ENCODE measurements at regions of chr4 and their contacts with region 1.

Region 1: DNA sequence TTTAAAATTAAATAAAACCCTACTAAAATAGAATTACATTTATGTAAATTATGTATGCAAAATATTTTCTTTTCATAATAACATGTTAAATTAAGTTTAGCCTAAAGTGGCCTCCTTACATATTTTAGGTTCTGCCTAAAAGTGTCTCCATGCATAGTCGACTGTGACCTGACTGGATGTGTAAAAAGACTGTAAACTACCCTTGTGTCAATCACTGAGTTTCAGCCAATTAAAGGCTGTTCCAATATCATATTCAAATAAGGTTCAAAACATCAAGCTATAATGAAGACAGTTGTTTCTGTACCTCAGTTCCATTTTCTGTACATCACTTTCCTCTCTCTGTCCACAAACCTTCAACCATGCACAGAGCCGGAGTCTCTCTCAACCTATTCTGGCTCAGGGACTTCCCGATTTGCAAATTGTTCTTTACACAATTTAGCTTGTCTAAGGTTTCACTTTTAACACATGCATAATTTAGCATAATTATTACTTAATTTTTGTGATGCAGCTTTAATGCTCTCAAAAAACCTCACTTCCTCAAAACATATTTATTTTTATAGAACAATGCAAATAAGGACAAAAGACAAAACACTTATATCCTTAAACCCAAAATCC is 60.1 kb downstream of the SH3RF1 start:
- DNase-seq: no peak
- ATAC-seq: peak; percentile 88
- H3K4me3 Mint-ChIP-seq: peak overlapping the region; percentile 67
- H3K27ac Mint-ChIP-seq: peak overlapping the region; percentile 89
- H3K4me1 Mint-ChIP-seq: peaks cover 53% of the 10 kb centered on the region
- H3K27me3 Mint-ChIP-seq: no peaks in the 10 kb centered on the region
- CTCF ChIP-seq: no peak

Region 2: DNA sequence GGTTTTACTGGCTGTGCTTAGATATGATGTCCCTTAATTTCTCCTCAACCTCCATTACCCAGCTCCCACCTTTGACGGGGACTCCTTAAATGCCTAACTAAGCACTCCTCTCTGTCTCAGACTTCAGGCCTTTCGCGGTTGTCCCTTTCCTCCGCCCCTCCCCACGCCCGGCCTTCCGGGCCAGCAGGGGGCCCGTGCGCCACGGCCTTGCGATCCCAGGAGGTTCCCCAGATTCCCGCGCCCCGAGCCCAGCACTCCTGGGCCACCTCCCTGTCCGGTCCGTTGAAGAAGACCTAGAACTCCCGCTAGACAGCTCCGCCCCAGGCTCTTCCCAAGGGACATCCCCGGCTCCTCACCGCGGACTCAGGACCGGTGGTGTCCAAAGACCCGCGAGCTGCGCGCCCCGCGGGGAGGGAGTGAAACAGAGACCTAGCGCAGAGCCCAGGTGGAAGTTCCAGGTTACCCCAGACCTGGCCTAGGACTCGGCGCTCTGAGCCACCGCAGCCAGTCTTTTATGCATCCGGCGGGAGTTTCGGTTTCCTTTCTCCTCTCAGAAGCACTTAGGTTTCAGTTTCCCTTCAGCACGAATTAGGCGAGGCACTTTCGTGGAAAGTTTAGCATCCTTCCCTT is 892.2 kb before region 1 on chr4 and contains the start of gene DDX60:
- CTCF ChIA-PET with region 1: no interaction called
- POLR2A ChIA-PET with region 1: no interaction called
- intact Hi-C with region 1: loop called (anchors 10 kb)
- DNase-seq: peak; percentile 68
- ATAC-seq: peak; percentile 92
- H3K4me3 Mint-ChIP-seq: peak within 1 kb of the TSS; percentile 95
- H3K27ac Mint-ChIP-seq: peak within 1 kb of the TSS; percentile 96
- H3K4me1 Mint-ChIP-seq: peaks cover 20% of the 10 kb centered on the region
- H3K27me3 Mint-ChIP-seq: no peaks in the 10 kb centered on the region
- CTCF ChIP-seq: no peak
- total RNA-seq, gene DDX60: 17.6 and 17.9 TPM in 2 replicates

Region 3: DNA sequence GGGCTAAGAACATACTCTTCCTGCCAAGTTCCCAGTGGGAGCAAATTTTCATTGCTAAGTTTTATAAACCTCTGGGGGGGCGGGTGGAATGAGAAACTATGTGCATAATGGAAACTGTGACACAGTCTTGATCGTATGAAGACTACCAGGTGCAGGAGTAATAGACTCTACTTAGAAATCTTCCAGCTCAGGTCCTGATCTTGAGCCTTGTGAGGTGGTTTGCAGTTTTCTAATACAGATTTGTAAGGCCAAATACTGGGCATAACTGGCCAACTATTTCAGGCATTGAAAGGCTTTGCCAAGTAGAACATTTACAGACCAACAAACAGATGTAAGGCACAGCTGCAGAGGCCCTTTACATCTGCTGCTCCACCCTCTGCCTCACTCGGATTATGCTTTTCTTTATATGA is 110.8 kb before region 1 on chr4:
- CTCF ChIA-PET with region 1: no interaction called
- POLR2A ChIA-PET with region 1: no interaction called
- intact Hi-C with region 1: loop called (anchors 1 kb)
- DNase-seq: no peak
- ATAC-seq: peak; percentile 6
- H3K4me3 Mint-ChIP-seq: no peak overlapping the region
- H3K27ac Mint-ChIP-seq: no peak overlapping the region
- H3K4me1 Mint-ChIP-seq: peaks cover 34% of the 10 kb centered on the region
- H3K27me3 Mint-ChIP-seq: no peaks in the 10 kb centered on the region
- CTCF ChIP-seq: no peak

Region 4: DNA sequence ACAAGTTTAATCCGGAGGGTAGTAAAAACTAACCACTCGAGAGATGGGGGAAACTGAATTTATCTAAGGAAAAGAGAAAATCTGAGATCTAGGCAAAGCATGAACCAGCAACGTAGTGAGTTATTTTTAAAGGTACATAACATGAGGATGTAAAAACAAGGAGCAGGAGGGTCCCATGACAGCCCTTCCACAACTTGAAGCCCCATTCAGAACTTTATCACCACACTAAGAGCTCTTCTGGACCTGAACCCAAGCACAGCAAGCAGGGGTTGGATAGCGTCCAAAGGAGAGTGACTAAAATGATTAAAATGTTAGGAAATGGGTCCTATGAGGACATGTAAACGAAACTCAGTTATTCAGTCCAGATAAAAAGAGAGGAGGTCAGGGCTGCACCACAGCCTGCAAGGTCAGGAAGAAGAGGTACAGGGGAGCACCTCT is 44.0 kb after region 1 on chr4:
- CTCF ChIA-PET with region 1: no interaction called
- POLR2A ChIA-PET with region 1: no interaction called
- intact Hi-C with region 1: loop called (anchors 5 kb)
- DNase-seq: no peak
- ATAC-seq: no peak
- H3K4me3 Mint-ChIP-seq: no peak overlapping the region
- H3K27ac Mint-ChIP-seq: no peak overlapping the region
- H3K4me1 Mint-ChIP-seq: peaks cover under 1% of the 10 kb centered on the region
- H3K27me3 Mint-ChIP-seq: no peaks in the 10 kb centered on the region
- CTCF ChIP-seq: no peak

Region 5: DNA sequence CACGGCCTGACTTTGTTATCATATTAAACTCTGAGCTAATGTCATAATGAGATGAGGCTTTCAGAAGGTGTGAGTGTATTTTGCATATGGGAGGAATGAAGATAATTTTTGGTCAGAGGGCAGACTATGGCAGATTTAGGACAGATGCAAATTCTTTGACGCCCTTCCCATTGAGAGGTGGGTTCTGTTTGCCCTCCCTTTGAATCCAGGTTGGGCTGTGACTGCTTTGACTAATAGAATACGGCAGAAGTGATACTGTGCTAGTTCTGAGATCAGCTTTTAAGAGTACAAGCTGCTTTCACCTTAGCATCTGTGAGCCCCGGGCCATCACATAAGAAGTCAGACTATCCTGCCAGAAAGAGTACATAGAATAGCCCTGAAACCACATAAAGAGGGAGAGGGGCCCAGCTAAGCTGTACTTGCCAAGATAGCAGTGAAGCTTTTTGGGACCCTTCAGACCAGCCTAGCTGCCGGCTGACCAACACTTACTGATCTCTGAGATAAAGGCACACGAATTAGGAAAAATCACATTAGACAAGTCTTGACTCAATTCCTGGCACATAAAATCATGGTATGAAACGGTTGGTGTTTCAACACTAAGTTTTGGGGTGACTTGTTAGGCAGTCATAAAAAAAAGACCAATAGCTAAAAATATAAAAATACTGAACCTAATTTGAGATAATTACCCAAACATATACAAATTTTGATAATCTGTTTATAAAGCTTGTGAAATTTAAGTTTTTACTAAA is 226.9 kb after region 1 on chr4:
- CTCF ChIA-PET with region 1: no interaction called
- POLR2A ChIA-PET with region 1: interaction called, 8 read pairs
- intact Hi-C with region 1: loop called (anchors 2 kb)
- DNase-seq: no peak
- ATAC-seq: peak; percentile 85
- H3K4me3 Mint-ChIP-seq: peak overlapping the region; percentile 36
- H3K27ac Mint-ChIP-seq: peak overlapping the region; percentile 84
- H3K4me1 Mint-ChIP-seq: peaks cover 39% of the 10 kb centered on the region
- H3K27me3 Mint-ChIP-seq: no peaks in the 10 kb centered on the region
- CTCF ChIP-seq: no peak

Region 6: DNA sequence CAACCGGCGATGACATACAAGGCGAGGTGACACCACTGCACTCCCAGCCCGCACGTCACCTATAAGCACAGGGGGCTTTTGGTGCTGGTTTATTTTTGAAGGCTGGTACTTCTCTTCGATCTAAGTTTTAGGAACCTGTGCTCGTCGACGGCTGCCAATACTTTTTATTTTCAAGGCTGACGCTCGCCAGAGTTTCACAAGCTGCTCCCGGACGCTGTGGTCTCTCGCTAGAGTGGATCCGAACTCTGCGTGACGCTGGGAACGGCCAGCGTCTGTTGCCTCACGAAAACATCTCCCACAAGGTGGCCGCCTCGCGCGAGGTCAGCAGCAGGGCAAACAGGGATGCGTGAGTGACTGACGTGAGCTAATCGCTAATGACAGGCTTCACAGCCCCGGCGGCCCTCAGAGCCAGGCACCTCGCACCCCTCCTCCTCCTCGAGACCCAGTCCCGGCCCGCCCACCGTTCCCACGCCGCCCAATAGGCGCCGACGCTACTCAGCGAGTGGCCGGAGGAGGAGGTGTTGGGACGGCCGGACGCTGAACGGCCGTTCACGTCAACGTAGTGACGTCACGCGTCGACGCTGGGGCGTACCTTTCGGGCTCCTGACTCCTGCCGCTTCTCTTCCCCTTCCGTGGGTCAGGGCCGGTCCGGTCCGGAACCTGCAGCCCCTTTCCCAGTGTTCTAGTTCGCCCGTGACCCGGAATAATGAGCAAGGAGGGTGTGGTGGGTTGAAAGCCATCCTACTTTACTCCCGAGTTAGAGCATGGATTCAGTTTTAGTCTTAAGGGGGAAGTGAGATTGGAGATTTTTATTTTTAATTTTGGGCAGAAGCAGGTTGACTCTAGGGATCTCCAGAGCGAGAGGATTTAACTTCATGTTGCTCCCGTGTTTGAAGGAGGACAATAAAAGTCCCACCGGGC is 409.6 kb after region 1 on chr4 and contains the start of gene CLCN3:
- CTCF ChIA-PET with region 1: no interaction called
- POLR2A ChIA-PET with region 1: no interaction called
- intact Hi-C with region 1: loop called (anchors 2 kb)
- DNase-seq: peak; percentile 92
- ATAC-seq: peak; percentile 93
- H3K4me3 Mint-ChIP-seq: peak within 1 kb of the TSS; percentile 100
- H3K27ac Mint-ChIP-seq: peak within 1 kb of the TSS; percentile 99
- H3K4me1 Mint-ChIP-seq: peaks cover 41% of the 10 kb centered on the region
- H3K27me3 Mint-ChIP-seq: no peaks in the 10 kb centered on the region
- CTCF ChIP-seq: no peak
- total RNA-seq, gene CLCN3: 23.0 and 28.6 TPM in 2 replicates

Region 7: DNA sequence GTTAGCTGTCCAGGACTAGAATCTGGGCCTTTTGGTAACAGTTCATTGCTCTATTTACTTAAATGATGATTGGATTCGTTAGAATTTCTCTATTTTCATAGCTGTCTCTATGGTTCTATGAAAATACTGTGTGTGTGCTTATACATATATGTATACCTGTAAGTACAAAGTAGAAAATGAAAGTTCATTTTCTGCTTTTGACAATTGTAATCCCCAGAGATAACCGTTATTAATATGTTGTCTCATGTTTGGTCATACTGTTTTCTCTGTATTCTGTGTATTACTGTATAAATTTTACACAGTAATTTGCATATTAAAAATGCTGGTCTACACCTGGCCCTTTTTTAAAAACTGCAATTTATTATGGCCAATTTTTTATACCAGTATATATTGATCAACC is 465.2 kb after region 1 on chr4:
- CTCF ChIA-PET with region 1: no interaction called
- POLR2A ChIA-PET with region 1: no interaction called
- intact Hi-C with region 1: no loop called
- DNase-seq: no peak
- ATAC-seq: no peak
- H3K4me3 Mint-ChIP-seq: no peak overlapping the region
- H3K27ac Mint-ChIP-seq: no peak overlapping the region
- H3K4me1 Mint-ChIP-seq: peaks cover 4% of the 10 kb centered on the region
- H3K27me3 Mint-ChIP-seq: no peaks in the 10 kb centered on the region
- CTCF ChIP-seq: no peak

Region 8: DNA sequence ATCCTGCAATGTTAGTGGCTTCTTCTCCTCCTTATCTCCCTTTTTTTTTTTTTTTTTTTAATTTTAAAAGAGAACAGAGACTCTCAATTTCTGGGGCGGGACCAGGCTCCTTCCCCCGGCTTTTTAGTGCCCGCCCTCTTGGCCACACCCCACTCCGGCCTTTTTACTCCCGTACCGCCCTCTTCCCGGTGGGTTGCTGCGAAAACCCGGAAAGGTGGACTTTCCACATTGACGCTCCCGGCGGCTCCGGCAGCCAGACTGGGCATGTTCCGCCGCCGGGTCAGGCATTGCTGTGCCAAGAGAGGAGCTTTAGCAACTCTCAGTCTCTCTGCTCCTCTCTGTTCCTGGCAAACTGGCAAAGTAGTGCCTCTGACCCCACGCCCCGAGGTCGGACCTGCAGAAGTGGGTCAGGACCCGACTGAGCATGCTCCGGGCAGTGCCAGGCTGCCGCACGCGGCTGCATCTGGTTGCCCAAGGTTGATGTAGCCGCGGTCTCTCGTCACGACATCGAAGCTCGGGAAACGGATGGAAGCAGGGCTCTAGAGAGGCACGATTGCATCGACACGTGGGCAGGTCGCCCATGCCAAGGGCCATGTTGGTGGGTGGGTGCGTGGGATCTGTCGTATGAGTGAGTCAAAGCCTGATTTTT is 816.7 kb after region 1 on chr4:
- CTCF ChIA-PET with region 1: no interaction called
- POLR2A ChIA-PET with region 1: no interaction called
- intact Hi-C with region 1: loop called (anchors 2 kb)
- DNase-seq: peak; percentile 86
- ATAC-seq: peak; percentile 76
- H3K4me3 Mint-ChIP-seq: peak overlapping the region; percentile 89
- H3K27ac Mint-ChIP-seq: peak overlapping the region; percentile 47
- H3K4me1 Mint-ChIP-seq: peaks cover 13% of the 10 kb centered on the region
- H3K27me3 Mint-ChIP-seq: peaks cover 21% of the 10 kb centered on the region
- CTCF ChIP-seq: no peak

Measured in activated B cell treated with CpG ODN at 0.5 μM for 24 hours (primary cell).